WTC11 (cell line): ENCODE measurements at regions of chr6 and their contacts with region 1.

Region 1: DNA sequence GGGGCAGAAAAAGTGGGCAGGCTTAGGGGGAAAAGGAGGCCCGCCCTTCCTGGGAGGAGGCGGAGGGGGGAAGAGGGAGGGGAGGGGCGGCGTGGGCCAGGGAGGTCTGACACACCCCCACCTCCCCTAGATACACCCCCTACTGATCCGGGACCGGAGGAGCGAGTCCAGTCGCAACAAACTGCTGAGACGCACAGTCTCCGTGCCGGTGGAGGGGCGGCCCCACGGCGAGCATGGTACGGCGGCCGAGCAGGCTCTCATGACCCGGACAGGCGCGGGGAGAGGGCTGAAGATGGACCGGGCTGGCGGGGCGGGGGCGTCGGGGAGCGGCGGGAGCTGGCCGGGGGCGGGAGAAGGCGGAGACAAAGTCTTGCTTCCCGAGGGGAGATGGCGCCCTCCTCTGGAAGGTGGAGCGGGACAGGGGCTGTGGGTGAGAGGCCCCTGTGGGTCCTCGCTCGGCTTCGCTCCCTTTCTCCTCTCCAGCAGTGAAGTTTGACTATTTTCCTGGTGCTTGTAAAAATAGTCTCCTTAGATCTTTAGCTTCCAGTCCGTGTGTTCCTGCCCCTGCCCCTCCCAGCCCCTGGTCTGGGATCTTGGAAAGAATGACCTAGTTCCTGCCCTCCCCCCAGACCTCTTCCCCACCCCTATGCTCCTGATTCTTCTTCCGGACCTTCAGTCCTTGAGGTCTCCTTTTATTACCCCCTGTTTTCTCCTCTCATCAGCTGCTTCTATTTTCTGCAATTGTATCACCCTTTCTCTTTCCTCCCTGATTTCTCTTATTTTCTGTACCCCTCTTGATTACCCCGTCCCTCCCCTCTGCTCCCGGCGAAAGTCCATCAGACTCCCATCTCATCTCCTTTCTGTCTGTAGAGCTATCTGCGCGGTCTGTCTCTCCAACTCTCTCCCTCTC is 6.1 kb downstream of the SYNGAP1 start:
- DNase-seq: peak; percentile 93
- ATAC-seq: peak; percentile 76
- H3K4me3 Mint-ChIP-seq: peak overlapping the region; percentile 85
- H3K27ac Mint-ChIP-seq: peak overlapping the region; percentile 93
- H3K4me1 Mint-ChIP-seq: peaks cover 74% of the 10 kb centered on the region
- H3K27me3 Mint-ChIP-seq: no peaks in the 10 kb centered on the region; the same call in 1 of the 2 replicates
- CTCF ChIP-seq: 0 out of 2 replicates have a peak, but pooled peaks have one; percentile 23

Region 2: DNA sequence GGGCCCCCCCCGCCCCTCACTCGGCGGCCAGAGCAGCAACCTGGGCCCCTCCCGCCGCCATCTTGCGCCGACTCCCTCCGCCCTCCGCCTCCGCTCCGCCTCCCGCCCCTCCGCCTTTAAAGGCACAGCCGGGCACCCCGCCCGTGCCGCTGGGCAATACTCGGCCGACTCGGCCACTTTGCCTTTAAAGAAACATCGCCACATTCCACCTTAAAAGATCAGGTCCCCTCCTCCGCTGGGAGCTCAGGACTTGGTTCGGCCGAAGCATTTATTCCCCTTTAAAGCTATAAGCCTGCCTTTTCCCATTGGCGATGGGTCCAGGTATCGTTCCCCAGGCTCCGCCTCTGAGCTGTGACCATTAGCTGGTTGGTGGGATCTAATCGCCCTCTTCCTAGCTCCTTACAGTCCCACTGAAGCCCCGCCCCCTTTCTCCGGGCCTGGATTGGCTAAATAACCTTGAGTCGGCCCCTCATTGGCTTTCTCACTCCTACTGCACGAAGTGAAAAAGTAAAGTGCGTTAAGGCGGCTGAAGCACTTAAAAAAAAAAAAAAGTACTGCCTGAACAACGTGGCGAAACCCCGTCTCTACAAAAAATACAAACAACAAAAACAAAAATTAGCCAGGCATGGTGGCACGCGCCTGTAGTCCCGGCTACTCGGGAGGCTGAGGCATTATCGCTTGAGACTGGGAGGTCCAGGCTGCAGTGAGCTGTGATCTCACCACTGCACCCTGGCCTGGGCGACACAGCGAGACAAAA is 108.1 kb before region 1 on chr6 and contains the start of gene ZBTB22:
- CTCF ChIA-PET with region 1: interaction called, 16 read pairs
- POLR2A ChIA-PET with region 1: interaction called, 8 read pairs
- DNase-seq: peak; percentile 99
- ATAC-seq: peak; percentile 81
- H3K4me3 Mint-ChIP-seq: peak within 1 kb of the TSS; percentile 97
- H3K27ac Mint-ChIP-seq: peak within 1 kb of the TSS; percentile 91
- H3K4me1 Mint-ChIP-seq: peaks cover 65% of the 10 kb centered on the region
- H3K27me3 Mint-ChIP-seq: no peaks in the 10 kb centered on the region; the same call in 1 of the 2 replicates
- CTCF ChIP-seq: no peak
- total RNA-seq, gene ZBTB22: 11.6 to 14.7 TPM (median 13.7 TPM) in 3 replicates

Region 3: GRCh38 chr6:33391278-33391921 is 34.5 kb before region 1 on chr6 and contains the start of gene KIFC1:
- CTCF ChIA-PET with region 1: interaction called, 21 read pairs
- POLR2A ChIA-PET with region 1: no interaction called
- DNase-seq: peak; percentile 99
- ATAC-seq: peak; percentile 96
- H3K4me3 Mint-ChIP-seq: peak within 1 kb of the TSS; percentile 96
- H3K27ac Mint-ChIP-seq: peak within 1 kb of the TSS; percentile 99
- H3K4me1 Mint-ChIP-seq: peaks cover 34% of the 10 kb centered on the region
- H3K27me3 Mint-ChIP-seq: peaks cover 4% of the 10 kb centered on the region; the same call in 1 of the 2 replicates
- CTCF ChIP-seq: peak; percentile 89
- total RNA-seq, gene KIFC1: 79.5 to 97.3 TPM (median 83.7 TPM) in 3 replicates

Region 4: GRCh38 chr6:33410050-33410710 is 15.7 kb before region 1 on chr6:
- CTCF ChIA-PET with region 1: interaction called, 17 read pairs
- POLR2A ChIA-PET with region 1: interaction called, 10 read pairs
- DNase-seq: peak; percentile 98
- ATAC-seq: peak; percentile 91
- H3K4me3 Mint-ChIP-seq: peak overlapping the region; percentile 83
- H3K27ac Mint-ChIP-seq: peak overlapping the region; percentile 98
- H3K4me1 Mint-ChIP-seq: peaks cover 21% of the 10 kb centered on the region
- H3K27me3 Mint-ChIP-seq: no peaks in the 10 kb centered on the region
- CTCF ChIP-seq: no peak

Region 5: GRCh38 chr6:33589731-33590530 is 164.0 kb after region 1 on chr6:
- CTCF ChIA-PET with region 1: no interaction called
- POLR2A ChIA-PET with region 1: no interaction called
- DNase-seq: peak; percentile 83
- ATAC-seq: peak; percentile 41
- H3K4me3 Mint-ChIP-seq: no peak overlapping the region
- H3K27ac Mint-ChIP-seq: no peak overlapping the region
- H3K4me1 Mint-ChIP-seq: peaks cover 35% of the 10 kb centered on the region
- H3K27me3 Mint-ChIP-seq: no peaks in the 10 kb centered on the region; the same call in none of the 2 replicates
- CTCF ChIP-seq: no peak; the same call in 1 of the 2 replicates